ENCODE measurements at regions of chr10 and their contacts with region 1.

Region 1: GRCh38 chr10:117174439-117175214 is 22.7 kb upstream of the KCNK18 start:
- DNase-seq: peak; percentile 32
- H3K4me3 ChIP-seq: peak overlapping the region; percentile 50
- H3K27ac ChIP-seq: no peak overlapping the region
- H3K27me3 ChIP-seq: peaks cover 30% of the 10 kb centered on the region
- CTCF ChIP-seq: peak; percentile 88

Region 2: DNA sequence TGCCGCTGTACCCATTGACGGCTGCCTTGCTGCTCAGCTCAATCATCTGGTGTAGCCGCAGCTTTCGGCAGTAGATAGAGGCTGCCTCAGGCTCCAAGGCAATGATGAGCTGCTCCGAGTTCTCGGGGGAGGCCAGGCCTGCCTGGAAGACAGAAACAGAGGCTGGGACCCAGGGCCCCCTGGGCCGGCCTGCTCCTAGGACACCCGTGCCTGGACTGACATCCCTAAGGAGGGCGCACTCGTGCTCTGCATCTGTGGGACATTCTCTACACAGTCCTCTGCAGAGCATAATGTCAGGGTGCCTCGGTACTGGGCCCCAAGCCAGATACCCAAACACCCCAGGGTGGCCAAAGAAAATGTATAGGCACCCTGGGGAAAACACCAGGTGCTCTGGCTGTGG is 490.8 kb before region 1 on chr10:
- CTCF ChIA-PET with region 1: interaction called, 10 read pairs
- POLR2A ChIA-PET with region 1: no interaction called
- DNase-seq: no peak
- H3K4me3 ChIP-seq: no peak overlapping the region
- H3K27ac ChIP-seq: no peak overlapping the region
- H3K27me3 ChIP-seq: no peaks in the 10 kb centered on the region
- CTCF ChIP-seq: no peak

Region 3: DNA sequence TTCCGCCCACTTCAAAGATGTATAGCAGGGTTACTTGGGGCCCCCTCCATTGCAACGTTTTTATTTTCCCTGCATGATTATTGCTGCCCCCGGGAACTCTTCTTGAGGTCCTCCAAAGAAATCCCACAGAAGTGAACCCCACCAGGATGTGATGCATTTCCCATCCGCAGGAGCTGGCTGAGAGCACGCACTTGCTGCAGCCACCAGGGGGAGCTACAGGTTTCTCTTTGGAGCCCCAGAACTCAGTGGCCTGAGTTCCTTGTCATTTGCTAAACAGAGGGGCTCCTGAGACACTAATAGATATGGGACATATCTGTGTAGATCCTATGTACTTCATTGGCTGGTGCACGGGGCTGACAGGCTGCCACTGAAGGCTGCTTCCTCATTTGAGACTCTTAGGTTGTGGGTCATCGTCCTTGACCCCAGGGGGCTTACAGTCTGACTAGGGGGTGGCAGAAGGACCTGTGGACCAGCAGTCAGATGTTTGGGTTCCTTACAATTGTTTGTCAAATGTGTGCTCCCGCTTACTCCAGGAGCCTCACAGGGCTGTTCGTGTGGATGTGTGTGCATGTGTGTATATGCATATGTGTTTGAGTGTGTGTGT is 377.6 kb before region 1 on chr10:
- CTCF ChIA-PET with region 1: interaction called, 234 read pairs
- POLR2A ChIA-PET with region 1: interaction called, 3 read pairs
- DNase-seq: peak; percentile 30
- H3K4me3 ChIP-seq: no peak overlapping the region
- H3K27ac ChIP-seq: no peak overlapping the region
- H3K27me3 ChIP-seq: peaks cover 19% of the 10 kb centered on the region
- CTCF ChIP-seq: peak; percentile 97

Region 4: DNA sequence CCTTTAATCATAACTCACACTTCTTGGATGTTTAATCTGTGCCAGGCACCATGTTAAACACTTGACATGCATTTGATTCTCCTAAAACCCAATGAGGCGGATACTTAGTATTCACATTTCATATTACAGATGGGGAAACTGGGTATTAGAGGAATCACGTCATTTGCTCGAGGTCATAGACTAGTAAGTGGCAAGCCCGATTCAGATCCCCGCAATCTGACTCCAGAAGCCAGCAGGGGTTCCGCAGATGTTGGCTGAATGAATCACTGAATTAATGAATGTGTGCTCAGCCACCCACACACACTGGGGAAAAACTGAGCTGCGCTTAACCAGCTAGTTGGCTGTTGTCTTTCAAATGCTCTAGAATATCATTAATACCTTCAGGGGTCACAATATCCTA is 347.8 kb before region 1 on chr10:
- CTCF ChIA-PET with region 1: interaction called, 20 read pairs
- POLR2A ChIA-PET with region 1: no interaction called
- DNase-seq: no peak
- H3K4me3 ChIP-seq: no peak overlapping the region
- H3K27ac ChIP-seq: no peak overlapping the region
- H3K27me3 ChIP-seq: peaks cover 3% of the 10 kb centered on the region
- CTCF ChIP-seq: no peak

Region 5: DNA sequence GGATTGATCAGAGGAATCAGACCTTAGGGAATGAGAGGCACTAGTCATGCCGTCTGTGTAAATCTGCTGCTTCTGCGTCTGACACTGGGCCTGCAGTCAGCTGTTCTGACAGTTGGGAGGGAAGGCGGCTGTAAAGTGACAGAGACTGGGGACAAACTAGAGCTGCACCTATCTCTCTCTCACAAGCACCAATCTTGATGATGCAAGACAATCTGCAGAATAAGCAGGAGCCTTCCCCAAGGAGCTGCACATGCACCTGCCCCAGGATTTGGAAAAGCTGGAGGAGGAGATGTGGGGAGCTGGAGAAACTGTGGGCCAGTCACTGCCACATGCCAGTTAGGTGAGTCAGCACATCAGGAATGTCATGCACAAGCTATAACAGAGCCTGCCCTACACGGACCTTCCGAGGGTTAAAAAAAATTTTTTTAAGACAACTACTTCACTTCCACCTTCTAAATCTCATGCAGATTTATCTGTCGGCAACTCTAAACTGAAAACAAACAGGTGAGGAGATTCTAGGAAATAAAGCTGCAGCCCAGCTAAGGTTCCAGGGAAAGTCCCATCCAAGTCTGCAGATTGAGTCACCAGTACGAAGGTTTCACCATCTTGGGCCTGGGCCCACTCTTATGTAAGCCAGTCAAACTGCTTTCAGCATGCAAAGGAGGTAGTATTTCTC is 286.1 kb before region 1 on chr10:
- CTCF ChIA-PET with region 1: interaction called, 13 read pairs
- POLR2A ChIA-PET with region 1: no interaction called
- DNase-seq: peak; percentile 55
- H3K4me3 ChIP-seq: no peak overlapping the region
- H3K27ac ChIP-seq: no peak overlapping the region
- H3K27me3 ChIP-seq: no peaks in the 10 kb centered on the region
- CTCF ChIP-seq: no peak

Region 6: GRCh38 chr10:117186832-117187615 is 12.4 kb after region 1 on chr10:
- CTCF ChIA-PET with region 1: interaction called, 12 read pairs
- POLR2A ChIA-PET with region 1: no interaction called
- DNase-seq: no peak
- H3K4me3 ChIP-seq: no peak overlapping the region
- H3K27ac ChIP-seq: no peak overlapping the region
- H3K27me3 ChIP-seq: no peaks in the 10 kb centered on the region
- CTCF ChIP-seq: no peak

Region 7: GRCh38 chr10:117223693-117224430 is 49.2 kb after region 1 on chr10:
- CTCF ChIA-PET with region 1: no interaction called
- POLR2A ChIA-PET with region 1: no interaction called
- DNase-seq: no peak
- H3K4me3 ChIP-seq: no peak overlapping the region
- H3K27ac ChIP-seq: no peak overlapping the region
- H3K27me3 ChIP-seq: no peaks in the 10 kb centered on the region
- CTCF ChIP-seq: no peak

Region 8: GRCh38 chr10:117382861-117383260 is 208.2 kb after region 1 on chr10:
- CTCF ChIA-PET with region 1: interaction called, 10 read pairs
- POLR2A ChIA-PET with region 1: no interaction called
- DNase-seq: no peak
- H3K4me3 ChIP-seq: no peak overlapping the region
- H3K27ac ChIP-seq: no peak overlapping the region
- H3K27me3 ChIP-seq: peaks cover 13% of the 10 kb centered on the region
- CTCF ChIP-seq: no peak